Activated CD4-positive, alpha-beta memory T cell treated with anti-CD3 and anti-CD28 coated beads, Interleukin-2, amount 10 ng/mL, durations not matched to agents 7 days and 5 days (primary cell): ENCODE measurements at regions of chr16 and their contacts with region 1.

Region 1: GRCh38 chr16:67428146-67428731 is 2.7 kb upstream of the HSD11B2 start:
- DNase-seq: peak; percentile 62
- H3K4me3 Mint-ChIP-seq: no peak overlapping the region
- H3K27ac Mint-ChIP-seq: no peak overlapping the region
- H3K4me1 Mint-ChIP-seq: peaks cover 7% of the 10 kb centered on the region
- H3K27me3 Mint-ChIP-seq: peaks cover 51% of the 10 kb centered on the region

Region 2: GRCh38 chr16:67393035-67393787 is 35.0 kb before region 1 on chr16 and contains the start of gene TPPP3:
- CTCF ChIA-PET with region 1: no interaction called
- POLR2A ChIA-PET with region 1: no interaction called
- DNase-seq: peak; percentile 39
- H3K4me3 Mint-ChIP-seq: no peak within 1 kb of the TSS
- H3K27ac Mint-ChIP-seq: no peak within 1 kb of the TSS
- H3K4me1 Mint-ChIP-seq: peaks cover 5% of the 10 kb centered on the region
- H3K27me3 Mint-ChIP-seq: peaks cover 44% of the 10 kb centered on the region
- total RNA-seq, gene TPPP3: not detected

Region 3: DNA sequence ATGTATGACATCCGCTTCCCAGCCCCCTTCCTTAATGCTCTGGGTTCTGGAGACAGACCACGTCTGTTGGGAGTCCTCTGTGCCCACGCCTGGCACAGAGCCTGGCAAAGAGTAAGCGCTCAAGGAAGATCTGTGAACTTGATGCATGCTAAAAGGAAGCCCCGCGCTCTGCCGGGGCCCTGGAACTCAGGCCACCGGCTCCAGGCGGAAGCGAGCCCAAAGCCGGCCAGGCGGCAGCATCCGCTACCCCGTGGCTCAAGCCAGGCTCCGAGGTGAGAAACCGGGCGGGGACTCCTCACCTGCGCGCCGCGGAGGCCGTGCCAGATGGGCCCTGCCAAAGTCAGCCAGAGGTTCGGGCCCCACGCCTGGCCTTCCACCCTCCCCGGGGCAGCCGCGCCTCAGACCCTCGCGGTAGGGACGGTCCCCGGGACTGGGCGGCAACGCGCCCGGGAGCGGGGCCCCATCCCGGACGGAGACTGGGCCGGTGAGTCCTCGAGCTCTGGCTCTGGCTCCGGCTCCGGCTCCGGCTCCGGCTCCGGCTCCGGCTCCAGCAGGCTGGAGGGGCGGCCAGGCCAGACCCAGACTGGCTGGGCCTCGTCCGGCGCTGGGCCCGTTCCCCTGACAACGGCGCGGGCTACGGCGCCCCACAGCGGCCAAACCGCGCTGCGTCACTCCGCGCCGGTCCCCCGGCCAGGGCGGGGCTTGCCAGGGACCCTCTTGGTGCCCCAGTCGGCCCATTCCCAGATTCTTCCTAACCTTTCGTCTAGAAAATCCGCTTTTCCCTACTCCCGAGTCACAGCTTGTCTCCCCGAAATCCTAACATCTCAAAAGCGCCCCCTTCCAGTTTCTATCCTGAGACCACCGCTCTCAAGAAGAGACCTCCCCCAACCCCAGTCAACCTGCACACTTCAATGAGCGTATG is 12.1 kb before region 1 on chr16 and contains the start of gene ZDHHC1:
- CTCF ChIA-PET with region 1: interaction called, 13 read pairs
- POLR2A ChIA-PET with region 1: interaction called, 5 read pairs
- DNase-seq: peak; percentile 55
- H3K4me3 Mint-ChIP-seq: peak within 1 kb of the TSS; percentile 56
- H3K27ac Mint-ChIP-seq: no peak within 1 kb of the TSS
- H3K4me1 Mint-ChIP-seq: peaks cover 11% of the 10 kb centered on the region
- H3K27me3 Mint-ChIP-seq: peaks cover 28% of the 10 kb centered on the region
- total RNA-seq, gene ZDHHC1: 0.23 to 0.45 TPM

Region 4: DNA sequence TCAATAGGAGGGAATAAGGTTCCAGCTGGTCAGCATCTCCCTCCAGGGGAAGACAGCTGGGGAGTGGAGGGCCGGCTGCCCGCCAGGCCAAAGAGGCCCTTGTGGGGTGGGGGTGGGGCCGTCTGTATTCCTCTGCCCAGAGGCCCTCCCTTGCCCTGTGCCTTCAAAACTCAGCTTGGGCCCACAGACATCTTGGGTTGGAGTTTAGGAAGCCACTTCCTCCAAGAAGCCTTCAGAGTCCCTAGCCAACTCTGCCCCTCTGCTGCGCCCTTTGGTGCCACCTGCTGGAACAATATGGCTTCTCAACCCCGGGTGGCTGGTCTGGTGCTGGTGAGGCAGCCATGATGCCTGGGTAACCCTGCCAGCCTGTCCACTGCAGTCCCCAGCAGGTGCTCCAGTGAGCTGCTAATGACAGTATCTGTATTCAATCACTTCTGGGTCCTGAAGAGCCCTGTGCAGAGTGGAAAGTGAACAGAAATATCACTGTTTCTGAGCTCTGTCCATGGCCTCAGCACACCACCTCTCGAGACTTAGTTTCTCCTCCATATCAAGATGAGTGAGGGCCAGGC is 19.4 kb after region 1 on chr16:
- CTCF ChIA-PET with region 1: interaction called, 66 read pairs
- POLR2A ChIA-PET with region 1: interaction called, 3 read pairs
- DNase-seq: peak; percentile 86
- H3K4me3 Mint-ChIP-seq: no peak overlapping the region
- H3K27ac Mint-ChIP-seq: no peak overlapping the region
- H3K4me1 Mint-ChIP-seq: peaks cover 4% of the 10 kb centered on the region
- H3K27me3 Mint-ChIP-seq: no peaks in the 10 kb centered on the region

Region 5: DNA sequence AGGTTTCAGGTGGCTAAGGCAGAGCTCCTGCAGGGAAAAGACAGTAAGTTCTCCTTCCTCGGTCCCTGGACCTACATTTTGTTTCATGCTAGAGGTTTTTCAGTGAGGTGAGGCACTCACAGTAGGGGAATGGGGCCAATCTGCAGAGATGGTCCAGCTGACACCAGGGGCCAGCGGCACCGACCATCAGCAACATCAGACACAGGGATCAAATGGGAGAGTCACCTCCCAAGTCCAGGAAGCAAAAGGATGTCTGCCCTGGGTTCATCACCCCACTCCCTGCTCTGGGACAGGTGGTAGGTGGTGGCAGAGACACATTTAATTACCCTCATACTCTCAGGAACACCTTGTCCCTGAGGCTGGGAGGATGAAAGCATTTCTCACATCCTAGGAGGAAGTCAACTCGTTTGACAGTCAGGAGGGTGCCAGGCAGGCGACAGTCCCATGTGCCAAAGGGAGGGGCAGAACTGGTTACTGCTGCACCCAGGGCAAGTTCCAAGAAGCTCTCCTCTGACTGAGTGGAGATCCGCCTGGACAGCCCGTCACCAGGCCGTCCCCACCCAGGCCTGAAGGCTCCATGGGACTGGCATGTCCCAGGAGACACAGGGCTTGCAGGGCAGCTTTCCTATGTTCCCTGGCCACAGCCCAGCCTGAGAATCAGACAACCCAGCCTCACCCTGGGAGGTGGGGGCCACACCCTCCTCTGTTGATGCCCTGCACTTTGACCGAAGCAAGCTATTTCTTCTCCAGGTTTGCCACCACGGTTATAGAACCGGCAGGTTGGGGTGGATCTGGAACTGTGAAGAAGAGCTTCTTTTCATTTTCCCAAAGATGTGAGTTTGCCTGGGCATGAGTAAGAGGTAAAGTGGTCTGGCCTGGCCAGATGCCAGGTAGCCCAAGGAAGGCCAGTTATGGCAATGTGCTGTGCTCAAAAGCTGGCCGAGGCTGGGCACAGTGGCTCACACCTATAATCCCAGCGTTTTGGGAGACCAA is 33.7 kb after region 1 on chr16:
- CTCF ChIA-PET with region 1: interaction called, 58 read pairs
- POLR2A ChIA-PET with region 1: no interaction called
- DNase-seq: no peak
- H3K4me3 Mint-ChIP-seq: no peak overlapping the region
- H3K27ac Mint-ChIP-seq: no peak overlapping the region
- H3K4me1 Mint-ChIP-seq: peaks cover 11% of the 10 kb centered on the region
- H3K27me3 Mint-ChIP-seq: no peaks in the 10 kb centered on the region